Activated CD8-positive, alpha-beta T cell treated with anti-CD3 and anti-CD28 coated beads, Interleukin-2, amount 10 ng/mL, durations not matched to agents 7 days and 5 days (primary cell): ENCODE measurements at regions of chr20 and their contacts with region 1.

Region 1: DNA sequence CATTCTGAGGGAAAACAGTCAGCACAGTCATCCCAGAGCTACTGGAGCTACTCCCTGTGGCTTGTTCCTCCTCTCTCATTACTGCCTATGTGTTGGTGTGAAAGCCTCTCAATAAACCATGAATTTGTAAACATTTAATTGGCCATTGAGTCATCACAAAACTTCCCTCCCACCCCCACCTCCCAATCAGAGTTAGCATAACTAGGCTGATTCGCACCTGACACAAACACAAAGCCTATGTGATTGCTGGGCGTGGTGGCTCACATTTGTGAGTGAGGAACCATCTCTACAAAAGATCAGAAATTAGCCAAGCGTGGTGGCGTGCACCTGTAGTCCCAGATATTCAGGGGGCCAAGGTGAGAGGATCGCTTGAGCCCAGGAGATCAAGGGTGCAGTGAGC is 17.1 kb upstream of the SNTA1 start:
- DNase-seq: no peak
- ATAC-seq: no peak
- H3K4me3 Mint-ChIP-seq: no peak overlapping the region
- H3K27ac Mint-ChIP-seq: no peak overlapping the region
- H3K4me1 Mint-ChIP-seq: no peaks in the 10 kb centered on the region
- H3K27me3 Mint-ChIP-seq: no peaks in the 10 kb centered on the region

Region 2: DNA sequence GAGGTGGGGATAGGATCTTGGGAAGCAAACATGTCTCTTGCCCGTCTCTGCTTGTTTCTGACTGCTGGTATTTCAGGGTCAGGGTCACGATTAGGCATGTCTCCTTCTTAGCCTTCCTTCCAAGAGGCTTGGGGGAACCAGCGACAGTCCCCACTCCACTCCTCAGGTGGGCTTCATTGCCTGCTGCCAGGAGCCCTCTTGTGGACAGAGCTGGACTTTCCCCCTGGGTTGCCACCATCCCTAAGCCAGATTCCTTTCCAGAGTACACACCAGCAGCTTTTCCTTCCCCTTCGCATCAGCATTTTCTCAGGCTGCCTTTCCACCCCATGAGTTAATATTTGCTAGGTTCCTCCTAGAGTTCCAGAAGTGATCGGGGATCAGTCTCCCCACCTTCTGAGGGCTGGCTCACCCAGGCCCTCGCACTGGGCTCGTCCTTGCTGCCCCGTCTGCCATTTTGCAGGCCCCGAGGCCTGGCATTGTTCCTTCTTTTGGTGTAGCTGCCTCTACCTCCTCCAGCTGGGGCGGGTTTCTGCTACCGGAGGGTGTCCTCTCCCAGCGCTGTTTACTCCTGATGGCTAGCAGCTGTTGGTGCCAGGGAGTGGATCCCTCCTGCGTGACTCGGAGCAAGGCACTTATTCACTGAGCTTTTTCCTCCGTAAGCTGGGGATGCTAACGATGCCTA is 192.6 kb after region 1 on chr20:
- CTCF ChIA-PET with region 1: interaction called, 20 read pairs
- POLR2A ChIA-PET with region 1: no interaction called
- DNase-seq: peak; percentile 58
- ATAC-seq: peak; percentile 63
- H3K4me3 Mint-ChIP-seq: no peak overlapping the region
- H3K27ac Mint-ChIP-seq: peak overlapping the region; percentile 1
- H3K4me1 Mint-ChIP-seq: peaks cover 4% of the 10 kb centered on the region
- H3K27me3 Mint-ChIP-seq: no peaks in the 10 kb centered on the region